ENCODE measurements at regions of chr11 and their contacts with region 1.

Region 1: GRCh38 chr11:84958265-84958664 is 668.9 kb downstream of the DLG2 start:
- DNase-seq: no peak
- H3K4me3 Mint-ChIP-seq: no peak overlapping the region
- H3K27ac Mint-ChIP-seq: no peak overlapping the region
- H3K4me1 Mint-ChIP-seq: no peaks in the 10 kb centered on the region
- H3K27me3 Mint-ChIP-seq: no peaks in the 10 kb centered on the region
- CTCF ChIP-seq: no peak

Region 2: GRCh38 chr11:84914511-84914910 is 43.8 kb before region 1 on chr11:
- CTCF ChIA-PET with region 1: no interaction called
- intact Hi-C with region 1: loop called (anchors 1 kb)
- DNase-seq: no peak
- H3K4me3 Mint-ChIP-seq: no peak overlapping the region
- H3K27ac Mint-ChIP-seq: no peak overlapping the region
- H3K4me1 Mint-ChIP-seq: no peaks in the 10 kb centered on the region
- H3K27me3 Mint-ChIP-seq: no peaks in the 10 kb centered on the region
- CTCF ChIP-seq: no peak

Measured in Calu3 (cell line).